ENCODE measurements at regions of chr12 and their contacts with region 1.

Region 1: DNA sequence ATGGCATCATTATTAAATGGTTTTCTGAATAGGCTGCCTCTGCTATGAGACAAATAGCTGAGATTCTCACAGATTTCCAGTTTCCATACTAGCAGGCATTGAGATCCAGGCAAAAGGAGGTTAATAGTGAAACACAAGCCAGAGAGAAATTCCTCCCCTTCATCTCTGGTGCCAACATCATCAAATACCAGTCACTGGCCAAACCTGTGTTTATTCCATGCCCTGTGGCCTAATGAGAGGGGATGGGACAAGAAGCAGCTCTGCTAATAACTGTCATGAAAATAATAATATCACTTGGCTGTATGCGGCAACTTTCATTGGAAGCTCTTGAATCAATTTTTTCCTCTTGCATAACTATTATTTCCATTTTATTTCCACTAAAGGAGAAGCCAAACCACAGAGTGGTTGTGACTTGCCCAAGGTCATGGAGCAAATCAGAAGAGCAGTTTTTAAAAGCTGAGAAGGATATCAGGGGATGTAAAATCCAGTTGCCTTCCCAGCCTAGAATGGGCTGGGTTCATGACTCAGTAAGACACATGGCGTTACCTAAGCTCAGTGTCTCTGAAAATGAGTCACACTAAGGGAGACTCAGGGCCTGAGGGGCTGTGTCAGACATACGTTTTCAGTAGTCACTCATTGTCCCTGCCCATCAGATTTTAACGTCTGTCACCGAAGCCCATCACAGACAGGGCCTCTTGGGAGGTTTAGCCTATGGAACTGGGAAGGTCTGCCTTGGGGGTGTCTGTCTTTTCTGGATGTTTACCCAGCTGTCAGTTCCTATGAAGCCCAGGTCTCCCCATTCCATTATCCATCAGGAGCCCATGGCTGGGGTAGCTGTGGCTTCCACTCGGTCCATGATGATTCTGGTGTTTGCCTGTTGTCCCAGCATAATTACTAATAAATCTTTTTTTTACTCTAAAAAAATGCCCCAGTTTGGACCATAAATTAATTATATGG is 208.8 kb upstream of the EEA1 start:
- DNase-seq: no peak
- ATAC-seq: peak; percentile 77
- H3K4me3 ChIP-seq: no peak overlapping the region
- H3K27ac ChIP-seq: peak overlapping the region; percentile 59; the same call in 1 of the 2 replicates
- H3K4me1 ChIP-seq: peaks cover 45% of the 10 kb centered on the region
- H3K27me3 ChIP-seq: no peaks in the 10 kb centered on the region
- CTCF ChIP-seq: no peak
- EP300 ChIP-seq: no peak; a peak in 1 of 4 replicates
- POLR2A ChIP-seq: no peak
- RAD21 ChIP-seq: no peak

Region 2: GRCh38 chr12:92649511-92650227 is 488.3 kb before region 1 on chr12:
- CTCF ChIA-PET with region 1: no interaction called
- POLR2A ChIA-PET with region 1: no interaction called
- RAD21 ChIA-PET with region 1: no interaction called
- SMC1A ChIA-PET with region 1: no interaction called
- in situ Hi-C with region 1: no loop called
- intact Hi-C with region 1: no loop called
- DNase-seq: peak; percentile 67
- ATAC-seq: peak; percentile 98
- H3K4me3 ChIP-seq: no peak overlapping the region
- H3K27ac ChIP-seq: no peak overlapping the region
- H3K4me1 ChIP-seq: no peaks in the 10 kb centered on the region
- H3K27me3 ChIP-seq: no peaks in the 10 kb centered on the region
- CTCF ChIP-seq: peak; percentile 72 to 85 (median 76); a peak in 5 of 6 replicates
- EP300 ChIP-seq: no peak
- POLR2A ChIP-seq: no peak
- RAD21 ChIP-seq: peak; percentile 96

Region 3: DNA sequence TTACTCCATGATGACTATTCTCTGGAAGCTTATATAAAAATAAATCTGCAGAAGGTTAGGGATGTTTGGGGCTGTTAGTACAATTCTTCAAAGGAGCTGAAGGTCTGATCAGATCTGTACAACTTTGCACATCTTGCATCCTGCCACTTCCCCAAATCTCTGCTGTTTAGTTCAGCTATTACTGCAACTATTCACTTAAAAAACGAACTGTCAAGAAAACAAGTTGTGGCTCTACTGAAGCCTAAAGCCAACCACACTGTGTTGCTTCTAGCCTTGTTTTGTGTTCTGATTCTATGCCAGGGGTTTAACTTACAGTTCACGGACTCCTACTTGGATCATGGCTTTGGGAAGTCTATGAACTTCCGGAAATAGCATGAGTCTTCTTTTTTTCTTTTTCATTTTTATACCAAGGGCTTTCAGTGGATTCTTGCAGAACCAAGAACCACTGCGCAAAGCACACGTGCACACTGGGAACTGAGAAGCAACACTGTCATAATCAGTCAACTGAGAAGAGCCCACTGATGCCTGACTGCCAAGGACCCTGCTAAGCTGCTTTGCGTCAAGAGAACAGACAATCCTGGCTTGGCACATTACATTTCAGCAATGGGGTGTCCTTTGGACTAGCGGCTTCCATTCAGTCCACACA is 142.6 kb before region 1 on chr12:
- CTCF ChIA-PET with region 1: interaction called, 5 read pairs
- POLR2A ChIA-PET with region 1: interaction called, 3 read pairs
- RAD21 ChIA-PET with region 1: interaction called, 99 read pairs
- SMC1A ChIA-PET with region 1: interaction called, 10 read pairs
- in situ Hi-C with region 1: no loop called
- intact Hi-C with region 1: no loop called
- DNase-seq: peak; percentile 87
- ATAC-seq: peak; percentile 94
- H3K4me3 ChIP-seq: peak overlapping the region; percentile 49
- H3K27ac ChIP-seq: peak overlapping the region; percentile 84
- H3K4me1 ChIP-seq: peaks cover 30% of the 10 kb centered on the region
- H3K27me3 ChIP-seq: no peaks in the 10 kb centered on the region
- CTCF ChIP-seq: no peak
- EP300 ChIP-seq: no peak
- POLR2A ChIP-seq: no peak
- RAD21 ChIP-seq: no peak

Region 4: DNA sequence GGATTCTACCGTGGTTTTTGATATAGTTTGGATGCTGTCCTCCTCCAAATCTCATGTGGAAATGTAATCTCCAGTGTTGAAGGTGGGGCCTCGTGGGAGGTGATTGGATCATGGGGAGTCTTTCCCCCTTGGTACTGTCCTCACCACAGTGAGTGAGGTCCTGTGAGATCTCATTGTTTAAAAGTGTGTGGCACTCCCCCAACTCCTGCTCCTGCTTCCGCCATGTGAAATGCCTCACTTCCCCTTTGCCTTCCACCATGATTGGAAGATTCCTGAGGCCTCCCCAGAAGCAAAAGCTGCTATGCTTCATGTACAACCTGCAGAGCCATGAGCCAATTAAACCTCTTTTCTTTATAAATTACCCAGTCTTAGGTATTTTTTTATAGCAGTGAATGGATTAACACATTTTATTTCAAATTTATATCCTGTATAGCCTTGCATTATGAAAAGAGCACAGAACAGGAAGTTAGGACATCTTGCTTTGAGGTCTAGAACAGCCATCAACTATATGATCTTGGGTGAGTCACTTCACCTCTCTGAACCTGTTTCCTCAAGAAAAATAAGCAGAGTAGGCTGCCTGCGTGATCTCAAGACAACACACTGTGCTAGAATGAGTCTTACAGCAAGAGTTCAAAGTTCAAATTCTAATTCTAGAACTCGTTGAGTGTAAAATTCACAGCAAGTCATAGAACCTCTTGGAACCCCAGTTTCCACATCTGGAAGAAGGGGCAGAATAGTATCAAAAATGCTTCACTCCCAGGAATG is 47.9 kb before region 1 on chr12:
- CTCF ChIA-PET with region 1: interaction called, 120 read pairs
- POLR2A ChIA-PET with region 1: interaction called, 10 read pairs
- RAD21 ChIA-PET with region 1: interaction called, 130 read pairs
- SMC1A ChIA-PET with region 1: interaction called, 133 read pairs
- in situ Hi-C with region 1: no loop called
- intact Hi-C with region 1: loop called (anchors 5 kb)
- DNase-seq: no peak
- ATAC-seq: peak; percentile 81
- H3K4me3 ChIP-seq: no peak overlapping the region
- H3K27ac ChIP-seq: no peak overlapping the region
- H3K4me1 ChIP-seq: peaks cover 4% of the 10 kb centered on the region
- H3K27me3 ChIP-seq: no peaks in the 10 kb centered on the region
- CTCF ChIP-seq: no peak
- EP300 ChIP-seq: no peak
- POLR2A ChIP-seq: no peak
- RAD21 ChIP-seq: no peak

Region 5: DNA sequence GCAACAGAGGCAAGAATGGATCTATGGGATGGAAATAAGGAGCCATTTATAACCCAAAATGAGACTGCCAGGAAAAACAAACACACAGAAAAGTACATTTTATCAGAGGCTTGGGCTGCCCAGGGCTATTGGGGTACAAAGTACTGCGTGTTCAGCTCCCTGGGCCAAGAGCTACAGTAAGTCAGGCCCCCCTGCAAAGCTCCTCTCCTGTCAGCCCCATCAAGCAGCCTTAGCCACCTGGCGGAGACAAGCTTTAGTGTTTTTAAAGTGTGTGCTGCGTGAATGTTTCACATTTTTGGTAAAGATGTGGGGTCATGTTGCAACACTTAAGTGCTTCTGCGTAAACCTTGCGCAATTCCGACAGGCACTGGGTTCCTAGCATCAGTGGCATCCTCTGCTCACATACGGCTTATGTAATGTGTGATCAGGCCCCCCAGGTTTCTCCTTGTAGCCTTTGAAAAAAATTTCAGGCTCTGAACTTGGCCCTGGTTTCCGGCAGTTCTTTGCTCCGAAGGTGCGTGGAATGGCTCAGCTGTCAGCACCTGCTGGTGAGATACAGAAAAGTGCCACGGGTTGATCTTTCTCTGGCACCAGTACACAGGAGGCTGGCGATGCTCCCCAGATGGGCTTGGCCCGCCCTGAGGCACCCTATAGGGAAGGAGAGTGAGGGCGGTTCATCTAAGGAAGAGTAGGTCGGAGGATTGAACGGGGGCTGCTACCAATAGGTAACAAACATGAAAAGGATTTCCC is 10.2 kb before region 1 on chr12:
- CTCF ChIA-PET with region 1: interaction called, 5 read pairs
- POLR2A ChIA-PET with region 1: interaction called, 4 read pairs
- RAD21 ChIA-PET with region 1: interaction called, 7 read pairs
- SMC1A ChIA-PET with region 1: interaction called, 27 read pairs
- in situ Hi-C with region 1: no loop called
- intact Hi-C with region 1: no loop called
- DNase-seq: no peak
- ATAC-seq: no peak
- H3K4me3 ChIP-seq: no peak overlapping the region
- H3K27ac ChIP-seq: no peak overlapping the region
- H3K4me1 ChIP-seq: peaks cover 18% of the 10 kb centered on the region
- H3K27me3 ChIP-seq: no peaks in the 10 kb centered on the region
- CTCF ChIP-seq: no peak
- EP300 ChIP-seq: no peak
- POLR2A ChIP-seq: no peak
- RAD21 ChIP-seq: peak; percentile 26; the same call in 1 of the 2 replicates

Region 6: GRCh38 chr12:93183940-93184671 is 46.2 kb after region 1 on chr12:
- CTCF ChIA-PET with region 1: interaction called, 3 read pairs
- POLR2A ChIA-PET with region 1: interaction called, 4 read pairs
- RAD21 ChIA-PET with region 1: interaction called, 12 read pairs
- SMC1A ChIA-PET with region 1: interaction called, 11 read pairs
- in situ Hi-C with region 1: no loop called
- intact Hi-C with region 1: no loop called
- DNase-seq: peak; percentile 73
- ATAC-seq: peak; percentile 95
- H3K4me3 ChIP-seq: peak overlapping the region; percentile 20; the same call in 1 of the 2 replicates
- H3K27ac ChIP-seq: peak overlapping the region; percentile 86
- H3K4me1 ChIP-seq: peaks cover 25% of the 10 kb centered on the region
- H3K27me3 ChIP-seq: no peaks in the 10 kb centered on the region
- CTCF ChIP-seq: no peak
- EP300 ChIP-seq: peak; percentile 32; a peak in 2 of 4 replicates
- POLR2A ChIP-seq: 0 out of 2 replicates have a peak, but pooled peaks have one; percentile 25
- RAD21 ChIP-seq: no peak

Region 7: GRCh38 chr12:93302331-93303229 is 164.6 kb after region 1 on chr12:
- CTCF ChIA-PET with region 1: interaction called, 12 read pairs
- POLR2A ChIA-PET with region 1: no interaction called
- RAD21 ChIA-PET with region 1: interaction called, 33 read pairs
- SMC1A ChIA-PET with region 1: interaction called, 28 read pairs
- in situ Hi-C with region 1: no loop called
- intact Hi-C with region 1: no loop called
- DNase-seq: no peak
- ATAC-seq: peak; percentile 54
- H3K4me3 ChIP-seq: no peak overlapping the region
- H3K27ac ChIP-seq: no peak overlapping the region
- H3K4me1 ChIP-seq: peaks cover 9% of the 10 kb centered on the region
- H3K27me3 ChIP-seq: no peaks in the 10 kb centered on the region
- CTCF ChIP-seq: no peak
- EP300 ChIP-seq: no peak
- POLR2A ChIP-seq: no peak
- RAD21 ChIP-seq: 0 out of 2 replicates have a peak, but pooled peaks have one; percentile 1

Region 8: GRCh38 chr12:93397412-93397811 is 259.5 kb after region 1 on chr12:
- CTCF ChIA-PET with region 1: interaction called, 43 read pairs
- POLR2A ChIA-PET with region 1: no interaction called
- RAD21 ChIA-PET with region 1: interaction called, 26 read pairs
- SMC1A ChIA-PET with region 1: interaction called, 40 read pairs
- in situ Hi-C with region 1: no loop called
- intact Hi-C with region 1: no loop called
- DNase-seq: no peak
- ATAC-seq: no peak
- H3K4me3 ChIP-seq: no peak overlapping the region
- H3K27ac ChIP-seq: no peak overlapping the region
- H3K4me1 ChIP-seq: no peaks in the 10 kb centered on the region; the same call in 1 of the 2 replicates
- H3K27me3 ChIP-seq: no peaks in the 10 kb centered on the region
- CTCF ChIP-seq: no peak
- EP300 ChIP-seq: no peak
- POLR2A ChIP-seq: no peak
- RAD21 ChIP-seq: no peak

Measured in GM12878 (cell line).